ENCODE measurements at regions of chrX and their contacts with region 1.

Region 1: DNA sequence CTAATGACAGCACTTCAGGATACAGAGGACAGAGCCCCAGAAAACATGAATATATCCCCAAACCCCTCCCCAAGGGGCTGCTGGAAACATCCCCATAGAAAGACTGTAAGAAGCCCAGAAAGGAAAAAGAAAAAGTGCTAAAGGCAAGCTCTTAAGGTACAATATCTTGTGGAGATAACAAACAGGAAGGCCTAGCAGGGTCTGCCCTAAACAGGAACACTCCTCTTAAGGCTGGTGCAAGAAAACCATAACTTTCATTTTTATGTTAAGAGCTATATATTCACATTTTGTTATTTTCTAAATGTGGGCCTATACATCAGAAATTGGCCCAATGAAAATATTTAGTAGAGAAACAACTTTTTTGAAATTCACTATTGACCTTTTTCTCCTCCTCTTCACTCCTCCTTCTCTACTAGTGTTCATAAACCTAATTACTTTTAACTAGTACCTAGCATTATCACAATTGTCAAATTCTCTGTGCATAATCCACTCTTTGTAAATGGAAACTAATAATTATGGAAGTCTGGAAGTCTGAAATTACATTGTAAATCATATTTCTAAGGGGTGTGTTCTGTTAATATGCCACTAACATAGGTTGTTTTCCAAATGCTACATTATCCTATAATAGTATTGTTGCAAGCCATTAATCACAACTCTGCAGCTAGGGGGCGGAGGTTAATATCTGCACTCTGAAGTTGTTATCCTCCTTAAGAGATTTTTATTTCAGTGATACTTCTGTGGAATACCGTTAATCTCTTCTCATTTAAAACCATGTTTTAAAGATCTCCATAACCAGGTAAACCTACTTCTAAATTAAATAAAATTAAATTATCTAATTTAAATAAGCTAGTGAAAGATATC is 59.8 kb downstream of the CASK start:
- DNase-seq: no peak
- H3K4me3 ChIP-seq: no peak overlapping the region
- H3K27ac ChIP-seq: no peak overlapping the region
- H3K4me1 ChIP-seq: no peaks in the 10 kb centered on the region
- H3K27me3 ChIP-seq: no peaks in the 10 kb centered on the region
- CTCF ChIP-seq: no peak
- EP300 ChIP-seq: no peak
- POLR2A ChIP-seq: no peak

Region 2: DNA sequence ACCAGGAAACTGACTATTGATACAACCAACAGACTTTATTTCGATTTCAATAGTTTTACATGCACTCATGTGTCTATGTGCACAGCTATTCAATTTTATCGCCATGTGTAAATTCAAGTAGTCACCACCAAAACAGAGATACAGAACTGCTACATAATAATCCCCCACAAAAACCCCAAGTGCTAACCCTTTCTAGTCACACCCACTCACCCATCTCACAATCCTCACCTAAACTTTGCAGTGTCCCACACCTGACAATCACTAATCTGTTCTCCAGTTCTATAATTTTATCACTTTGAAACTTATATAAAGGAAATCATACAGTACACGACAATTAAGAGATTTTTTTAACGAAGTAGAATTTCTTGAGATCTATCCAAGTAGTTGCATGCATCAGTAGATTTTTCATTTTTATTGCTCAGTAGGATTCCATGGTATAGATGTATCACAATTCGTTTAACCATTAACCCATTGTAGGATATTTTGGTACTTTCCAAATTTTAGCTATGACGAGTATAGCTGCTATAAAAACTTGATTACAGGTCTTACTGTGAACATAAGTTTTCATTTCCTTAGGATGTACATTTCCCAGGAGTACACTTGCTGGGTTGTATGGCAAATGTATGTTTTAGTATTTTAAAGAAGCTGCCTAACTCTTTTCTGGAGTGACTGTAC is 26.2 kb before region 1 on chrX:
- intact Hi-C with region 1: no loop called
- DNase-seq: no peak
- H3K4me3 ChIP-seq: no peak overlapping the region
- H3K27ac ChIP-seq: no peak overlapping the region
- H3K4me1 ChIP-seq: no peaks in the 10 kb centered on the region
- H3K27me3 ChIP-seq: no peaks in the 10 kb centered on the region
- CTCF ChIP-seq: no peak
- EP300 ChIP-seq: no peak
- POLR2A ChIP-seq: no peak

Region 3: GRCh38 chrX:41923257-41923969 is 59.8 kb after region 1 on chrX and contains the start of gene CASK:
- intact Hi-C with region 1: loop called in 1 of 4 experiments (anchors 10 kb)
- DNase-seq: peak; percentile 90 to 94 (median 94)
- H3K4me3 ChIP-seq: peak within 1 kb of the TSS; percentile 56
- H3K27ac ChIP-seq: peak within 1 kb of the TSS; percentile 73
- H3K4me1 ChIP-seq: no peaks in the 10 kb centered on the region
- H3K27me3 ChIP-seq: no peaks in the 10 kb centered on the region
- CTCF ChIP-seq: no peak
- EP300 ChIP-seq: no peak
- POLR2A ChIP-seq: peak; percentile 64
- total RNA-seq, gene CASK: 25.7 to 70.9 (median 43.4) TPM